ENCODE measurements at regions of chr9 and their contacts with region 1.

Region 1: GRCh38 chr9:109799792-109800191 is 19.8 kb downstream of the PALM2AKAP2 start:
- DNase-seq: no peak

Region 2: GRCh38 chr9:109751253-109751652 is 48.5 kb before region 1 on chr9:
- intact Hi-C with region 1: loop called (anchors 10 kb)
- DNase-seq: peak in 31 of 42 donors; percentile 1 to 75 (median 30)

Region 3: GRCh38 chr9:109843641-109844040 is 43.8 kb after region 1 on chr9:
- intact Hi-C with region 1: no loop called
- DNase-seq: peak; percentile 11 to 75 (median 44)

Region 4: GRCh38 chr9:109989296-109989695 is 189.5 kb after region 1 on chr9:
- intact Hi-C with region 1: no loop called
- DNase-seq: no peak

Region 5: GRCh38 chr9:110088099-110088498 is 288.3 kb after region 1 on chr9:
- intact Hi-C with region 1: no loop called
- DNase-seq: no peak